Activated CD4-positive, alpha-beta T cell treated with anti-CD3 and anti-CD28 coated beads, Interleukin-2, amount 10 ng/mL, durations not matched to agents 7 days and 5 days (primary cell): ENCODE measurements at regions of chr18 and their contacts with region 1.

Region 1: DNA sequence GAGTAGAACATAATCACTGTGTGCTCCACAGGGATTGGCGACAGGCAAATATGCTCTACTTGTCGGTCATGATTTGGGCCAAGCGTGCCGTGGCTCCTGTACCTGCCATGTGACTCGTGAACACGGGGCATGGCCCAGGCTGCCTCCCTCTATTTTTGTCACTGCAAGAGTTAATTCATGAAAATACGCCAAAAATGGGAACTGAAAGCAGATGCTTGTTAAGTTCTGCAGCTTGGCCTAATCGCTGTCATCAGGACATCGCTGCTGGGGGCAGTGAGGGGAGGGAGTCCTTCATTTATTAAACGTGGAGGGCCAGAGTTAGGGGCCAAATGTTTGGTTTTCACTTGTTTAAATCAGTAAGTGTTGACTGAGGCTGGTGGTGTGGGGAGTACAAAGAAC is 177.8 kb downstream of the BCL2 start:
- DNase-seq: no peak
- H3K4me3 Mint-ChIP-seq: no peak overlapping the region
- H3K27ac Mint-ChIP-seq: no peak overlapping the region
- H3K4me1 Mint-ChIP-seq: peaks cover 74% of the 10 kb centered on the region
- H3K27me3 Mint-ChIP-seq: no peaks in the 10 kb centered on the region

Region 2: GRCh38 chr18:62832282-62832681 is 309.5 kb before region 1 on chr18:
- CTCF ChIA-PET with region 1: no interaction called
- POLR2A ChIA-PET with region 1: no interaction called
- DNase-seq: no peak
- H3K4me3 Mint-ChIP-seq: no peak overlapping the region
- H3K27ac Mint-ChIP-seq: no peak overlapping the region
- H3K4me1 Mint-ChIP-seq: no peaks in the 10 kb centered on the region
- H3K27me3 Mint-ChIP-seq: no peaks in the 10 kb centered on the region

Region 3: GRCh38 chr18:63074981-63075404 is 66.8 kb before region 1 on chr18:
- CTCF ChIA-PET with region 1: no interaction called
- POLR2A ChIA-PET with region 1: no interaction called
- DNase-seq: peak; percentile 63
- H3K4me3 Mint-ChIP-seq: peak overlapping the region; percentile 63
- H3K27ac Mint-ChIP-seq: peak overlapping the region; percentile 42
- H3K4me1 Mint-ChIP-seq: peaks cover 17% of the 10 kb centered on the region
- H3K27me3 Mint-ChIP-seq: peaks cover 21% of the 10 kb centered on the region

Region 4: DNA sequence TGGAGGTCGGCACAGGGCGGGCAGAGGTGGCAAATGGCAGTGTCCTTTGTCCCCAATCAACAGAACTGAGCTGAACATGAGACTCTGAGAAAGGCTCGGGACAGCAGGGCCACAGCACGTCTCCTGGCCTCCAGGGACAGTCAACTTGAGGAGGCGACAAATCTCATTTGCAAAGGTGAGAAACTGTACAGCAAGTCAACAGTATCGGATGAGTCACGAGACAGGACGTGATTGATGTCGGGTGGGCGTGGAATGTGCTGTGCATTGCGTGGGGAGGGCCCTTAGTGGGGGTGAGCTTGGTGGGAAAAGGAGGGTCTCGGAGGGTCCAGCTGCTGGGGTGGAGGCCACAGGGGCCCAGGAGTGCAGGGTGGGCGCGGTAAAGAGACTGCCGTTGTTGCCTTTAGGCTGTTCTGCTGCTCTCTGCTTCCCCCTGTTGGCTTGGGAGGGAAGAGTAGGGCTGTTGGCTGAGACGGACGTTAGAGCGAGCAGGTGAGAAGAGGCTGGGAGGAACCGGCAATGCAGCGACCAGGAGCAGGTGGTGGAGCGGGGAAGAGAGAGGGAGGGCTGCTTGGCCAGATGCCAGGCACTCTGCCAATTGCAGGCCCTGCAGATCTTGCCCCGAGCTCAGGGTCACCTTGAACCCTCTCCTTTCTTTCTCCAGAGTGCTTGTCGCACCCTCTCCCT is 13.5 kb after region 1 on chr18:
- CTCF ChIA-PET with region 1: interaction called, 10 read pairs
- POLR2A ChIA-PET with region 1: no interaction called
- DNase-seq: peak; percentile 86
- H3K4me3 Mint-ChIP-seq: peak overlapping the region; percentile 70
- H3K27ac Mint-ChIP-seq: peak overlapping the region; percentile 90
- H3K4me1 Mint-ChIP-seq: peaks cover 99% of the 10 kb centered on the region
- H3K27me3 Mint-ChIP-seq: no peaks in the 10 kb centered on the region